Panc1 (cell line): ENCODE measurements at regions of chr18 and their contacts with region 1.

Region 1: GRCh38 chr18:13036622-13037320 is 45.6 kb downstream of the CEP192 start:
- DNase-seq: no peak
- ATAC-seq: no peak
- H3K4me3 ChIP-seq: no peak overlapping the region
- H3K27ac ChIP-seq: no peak overlapping the region
- H3K4me1 ChIP-seq: no peaks in the 10 kb centered on the region
- H3K27me3 ChIP-seq: no peaks in the 10 kb centered on the region
- CTCF ChIP-seq: no peak

Region 2: DNA sequence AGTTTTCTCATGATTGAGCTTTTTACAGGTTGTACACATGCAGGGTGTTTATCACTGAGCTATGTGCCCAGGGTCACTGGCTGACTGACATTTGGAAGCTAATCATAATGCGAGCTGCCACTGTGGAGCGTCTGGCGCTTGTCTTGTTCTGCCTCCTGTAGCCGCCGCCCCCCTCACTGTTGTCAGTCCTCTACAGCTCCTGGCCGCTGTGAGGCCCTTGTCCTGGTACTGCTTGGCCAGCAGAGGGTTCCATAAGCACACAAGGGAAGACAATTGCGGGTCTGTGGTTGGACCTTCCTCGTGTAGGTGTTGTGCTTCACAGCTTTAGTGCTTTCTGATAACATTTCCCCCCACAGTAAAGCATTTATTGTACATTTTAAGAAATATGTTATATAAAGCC is 76.2 kb after region 1 on chr18:
- CTCF ChIA-PET with region 1: no interaction called
- POLR2A ChIA-PET with region 1: no interaction called
- in situ Hi-C with region 1: no loop called
- intact Hi-C with region 1: loop called (anchors 10 kb)
- DNase-seq: no peak
- ATAC-seq: peak; percentile 89
- H3K4me3 ChIP-seq: no peak overlapping the region
- H3K27ac ChIP-seq: no peak overlapping the region
- H3K4me1 ChIP-seq: no peaks in the 10 kb centered on the region
- H3K27me3 ChIP-seq: no peaks in the 10 kb centered on the region
- CTCF ChIP-seq: peak; percentile 47; the same call in 1 of the 2 replicates